ENCODE measurements at regions of chr10 and their contacts with region 1.

Region 1: GRCh38 chr10:79374312-79375191 is 27.3 kb downstream of the PPIF start:
- DNase-seq: peak; percentile 91
- H3K4me3 Mint-ChIP-seq: no peak overlapping the region
- H3K27ac Mint-ChIP-seq: no peak overlapping the region
- H3K4me1 Mint-ChIP-seq: no peaks in the 10 kb centered on the region
- H3K27me3 Mint-ChIP-seq: no peaks in the 10 kb centered on the region
- CTCF ChIP-seq: peak; percentile 99

Region 2: GRCh38 chr10:79463578-79464496 is 89.3 kb after region 1 on chr10:
- CTCF ChIA-PET with region 1: interaction called, 5 read pairs
- intact Hi-C with region 1: loop called (anchors 1 kb)
- DNase-seq: no peak
- H3K4me3 Mint-ChIP-seq: no peak overlapping the region
- H3K27ac Mint-ChIP-seq: no peak overlapping the region
- H3K4me1 Mint-ChIP-seq: no peaks in the 10 kb centered on the region
- H3K27me3 Mint-ChIP-seq: peaks cover 17% of the 10 kb centered on the region
- CTCF ChIP-seq: no peak

Region 3: GRCh38 chr10:79487296-79488194 is 113.0 kb after region 1 on chr10:
- CTCF ChIA-PET with region 1: interaction called, 38 read pairs
- intact Hi-C with region 1: loop called (anchors 1 kb)
- DNase-seq: peak; percentile 78
- H3K4me3 Mint-ChIP-seq: no peak overlapping the region
- H3K27ac Mint-ChIP-seq: no peak overlapping the region
- H3K4me1 Mint-ChIP-seq: peaks cover 13% of the 10 kb centered on the region
- H3K27me3 Mint-ChIP-seq: peaks cover 43% of the 10 kb centered on the region
- CTCF ChIP-seq: peak; percentile 75

Region 4: GRCh38 chr10:79502561-79503309 is 128.2 kb after region 1 on chr10:
- CTCF ChIA-PET with region 1: interaction called, 17 read pairs
- intact Hi-C with region 1: loop called (anchors 2 kb)
- DNase-seq: peak; percentile 65
- H3K4me3 Mint-ChIP-seq: no peak overlapping the region
- H3K27ac Mint-ChIP-seq: no peak overlapping the region
- H3K4me1 Mint-ChIP-seq: peaks cover 6% of the 10 kb centered on the region
- H3K27me3 Mint-ChIP-seq: peaks cover 77% of the 10 kb centered on the region
- CTCF ChIP-seq: peak; percentile 75